Ascending aorta (tissue), 2 donors: ENCODE measurements at regions of chr16 and their contacts with region 1.

Region 1: GRCh38 chr16:84617791-84618580 is at the start of gene COTL1:
- DNase-seq: peak; percentile 92 to 99
- H3K4me3 ChIP-seq: peak within 1 kb of the TSS; percentile 93 to 97
- H3K27ac ChIP-seq: peak within 1 kb of the TSS; percentile 74 to 84
- H3K4me1 ChIP-seq: peaks cover 3 to 25% of the 10 kb centered on the region in 2 donors
- H3K27me3 ChIP-seq: no peaks in the 10 kb centered on the region
- CTCF ChIP-seq: no peak
- total RNA-seq, gene COTL1: 120 TPM

Region 2: DNA sequence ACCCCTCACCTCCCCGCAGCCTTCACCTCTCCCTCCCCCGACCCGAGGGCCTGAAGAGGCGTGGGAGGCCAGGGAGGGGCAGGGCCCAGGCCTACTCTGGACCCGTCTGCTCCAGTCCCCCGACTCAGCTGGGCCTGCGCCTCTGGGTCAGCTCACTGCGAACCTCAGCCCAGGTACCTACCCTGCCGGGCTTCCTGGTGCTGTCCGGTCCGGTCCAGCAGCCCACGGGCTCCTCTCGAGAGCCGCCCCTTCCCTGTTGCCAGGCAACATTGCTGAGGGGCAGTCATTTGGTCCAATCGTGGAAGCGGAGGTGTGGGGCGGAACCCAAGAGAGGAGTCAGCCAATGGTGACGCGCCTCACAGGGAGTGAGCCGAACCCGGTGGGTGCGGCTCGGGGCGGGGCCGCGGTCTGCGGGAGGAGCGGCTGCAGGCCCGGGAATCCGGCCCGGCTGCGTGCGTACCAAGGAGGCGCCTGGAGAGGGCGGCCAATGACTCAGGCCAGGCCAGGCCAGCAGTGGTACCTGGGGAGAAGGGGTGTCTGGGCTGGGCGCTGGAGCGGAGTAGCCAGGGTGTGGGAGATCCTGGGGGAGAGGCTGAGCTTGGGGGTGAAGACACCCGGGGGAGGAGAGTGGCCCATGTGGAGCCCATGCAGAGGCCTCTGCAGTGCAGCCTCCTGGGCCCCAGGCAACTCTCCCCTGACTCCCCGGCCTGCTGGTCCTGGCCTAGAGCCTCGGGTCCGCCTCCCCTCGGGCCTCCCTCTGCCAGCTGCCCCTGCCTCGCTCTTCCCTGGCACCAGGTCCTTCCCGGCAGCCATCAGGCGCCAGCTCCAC is 113.4 kb before region 1 on chr16 and contains the start of gene MEAK7:
- intact Hi-C with region 1: loop called (anchors 1 kb)
- DNase-seq: peak; percentile 97 to 99
- H3K4me3 ChIP-seq: peak within 1 kb of the TSS; percentile 75 to 78
- H3K27ac ChIP-seq: peak within 1 kb of the TSS; percentile 83 to 92
- H3K4me1 ChIP-seq: peaks cover 0 to 7% of the 10 kb centered on the region in 2 donors
- H3K27me3 ChIP-seq: no peaks in the 10 kb centered on the region
- CTCF ChIP-seq: peak in 2 of 3 experiments; percentile 5 to 18
- total RNA-seq, gene MEAK7: 5.4 TPM

Region 3: DNA sequence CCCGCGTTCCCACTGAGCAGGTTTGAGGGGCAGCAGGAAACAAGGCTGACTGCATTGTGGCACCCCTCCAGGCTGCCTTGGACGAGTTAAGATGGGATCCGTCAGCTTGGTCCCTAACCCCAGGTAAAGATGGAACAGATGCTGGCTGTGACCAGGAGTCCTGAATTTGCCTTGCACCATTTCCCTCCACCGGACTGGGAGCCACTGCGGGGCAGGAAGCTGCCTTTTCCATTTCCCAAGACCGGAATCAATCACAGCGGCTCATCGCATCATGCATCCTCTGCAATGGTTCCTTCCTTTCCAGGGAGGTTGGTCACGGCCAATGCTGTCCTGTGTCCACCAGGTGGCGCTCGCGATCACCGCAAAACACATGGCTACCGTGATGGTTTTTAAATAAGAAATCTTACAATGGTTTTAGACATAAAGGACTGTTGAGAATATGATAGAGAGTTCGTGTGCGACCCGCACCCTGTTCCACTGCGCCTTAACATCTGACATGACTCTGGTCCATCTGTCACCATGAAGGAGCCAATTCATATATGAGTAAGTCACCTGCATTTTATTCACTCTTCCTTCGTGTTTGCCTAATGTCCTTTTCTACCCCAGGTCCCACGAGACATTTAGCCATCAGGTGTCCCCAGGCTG is 106.7 kb before region 1 on chr16:
- intact Hi-C with region 1: loop called (anchors 1 kb)
- DNase-seq: peak; percentile 46 to 93
- H3K4me3 ChIP-seq: peak overlapping the region in 1 of 2 donors; percentile 4
- H3K27ac ChIP-seq: no peak overlapping the region
- H3K4me1 ChIP-seq: no peaks in the 10 kb centered on the region
- H3K27me3 ChIP-seq: no peaks in the 10 kb centered on the region
- CTCF ChIP-seq: peak; percentile 95 to 98 (median 95)

Region 4: GRCh38 chr16:84532291-84532724 is 85.7 kb before region 1 on chr16:
- intact Hi-C with region 1: loop called (anchors 1 kb)
- DNase-seq: peak in 1 of 2 donors; percentile 91
- H3K4me3 ChIP-seq: no peak overlapping the region
- H3K27ac ChIP-seq: peak overlapping the region; percentile 58 to 80
- H3K4me1 ChIP-seq: peaks cover 26% of the 10 kb centered on the region in 2 donors
- H3K27me3 ChIP-seq: no peaks in the 10 kb centered on the region
- CTCF ChIP-seq: no peak

Region 5: DNA sequence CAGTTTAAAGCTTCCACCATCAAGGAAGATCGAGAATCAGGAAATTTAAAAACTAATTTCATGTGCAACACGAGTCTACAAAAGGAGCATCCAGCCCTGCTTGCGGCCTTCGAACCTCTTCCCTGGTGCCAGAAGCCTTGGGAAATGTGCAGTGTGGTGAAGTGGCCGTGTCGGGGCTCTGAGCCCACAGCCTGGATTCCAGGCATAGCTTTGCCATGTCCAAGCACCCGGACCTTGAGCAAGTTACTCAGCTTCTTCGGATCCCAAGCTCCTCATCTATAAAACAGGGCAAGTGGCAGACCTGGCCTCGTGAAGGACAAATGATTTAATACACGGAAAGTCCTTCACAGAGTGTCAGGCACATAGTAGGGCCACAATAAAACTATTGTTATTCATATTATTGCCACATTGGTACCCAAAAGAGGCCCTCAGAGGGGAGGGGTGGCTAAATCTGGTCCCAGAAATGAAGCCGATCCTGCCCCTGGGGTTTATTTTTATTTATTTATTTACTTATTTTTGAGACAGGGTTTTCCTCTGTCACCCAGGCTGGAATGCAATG is 34.9 kb before region 1 on chr16:
- intact Hi-C with region 1: loop called (anchors 2 kb)
- DNase-seq: peak in 1 of 2 donors; percentile 74
- H3K4me3 ChIP-seq: no peak overlapping the region
- H3K27ac ChIP-seq: peak overlapping the region; percentile 51 to 61
- H3K4me1 ChIP-seq: peaks cover 12 to 27% of the 10 kb centered on the region in 2 donors
- H3K27me3 ChIP-seq: no peaks in the 10 kb centered on the region
- CTCF ChIP-seq: no peak

Region 6: GRCh38 chr16:84603140-84603816 is 14.7 kb before region 1 on chr16:
- intact Hi-C with region 1: loop called (anchors 1 kb)
- DNase-seq: peak; percentile 89 to 97
- H3K4me3 ChIP-seq: peak overlapping the region in 1 of 2 donors; percentile 36
- H3K27ac ChIP-seq: peak overlapping the region; percentile 63 to 64
- H3K4me1 ChIP-seq: peaks cover 6 to 24% of the 10 kb centered on the region in 2 donors
- H3K27me3 ChIP-seq: no peaks in the 10 kb centered on the region
- CTCF ChIP-seq: no peak

Region 7: GRCh38 chr16:84647828-84648594 is 30.0 kb after region 1 on chr16 and contains the start of gene KLHL36:
- intact Hi-C with region 1: no loop called
- DNase-seq: peak in 1 of 2 donors; percentile 81
- H3K4me3 ChIP-seq: peak within 1 kb of the TSS; percentile 71 to 78
- H3K27ac ChIP-seq: peak within 1 kb of the TSS; percentile 75 to 83
- H3K4me1 ChIP-seq: peaks cover 5 to 23% of the 10 kb centered on the region in 2 donors
- H3K27me3 ChIP-seq: no peaks in the 10 kb centered on the region
- CTCF ChIP-seq: peak in 1 of 3 experiments; percentile 16
- total RNA-seq, gene KLHL36: 65.1 TPM

Region 8: GRCh38 chr16:84726079-84726668 is 108.2 kb after region 1 on chr16:
- intact Hi-C with region 1: loop called (anchors 1 kb)
- DNase-seq: peak; percentile 50 to 94
- H3K4me3 ChIP-seq: peak overlapping the region in 1 of 2 donors; percentile 11
- H3K27ac ChIP-seq: peak overlapping the region in 1 of 2 donors; percentile 10
- H3K4me1 ChIP-seq: peaks cover 6 to 14% of the 10 kb centered on the region in 2 donors
- H3K27me3 ChIP-seq: no peaks in the 10 kb centered on the region
- CTCF ChIP-seq: peak; percentile 89 to 92 (median 89)